ENCODE measurements at regions of chr21 and their contacts with region 1.

Region 1: DNA sequence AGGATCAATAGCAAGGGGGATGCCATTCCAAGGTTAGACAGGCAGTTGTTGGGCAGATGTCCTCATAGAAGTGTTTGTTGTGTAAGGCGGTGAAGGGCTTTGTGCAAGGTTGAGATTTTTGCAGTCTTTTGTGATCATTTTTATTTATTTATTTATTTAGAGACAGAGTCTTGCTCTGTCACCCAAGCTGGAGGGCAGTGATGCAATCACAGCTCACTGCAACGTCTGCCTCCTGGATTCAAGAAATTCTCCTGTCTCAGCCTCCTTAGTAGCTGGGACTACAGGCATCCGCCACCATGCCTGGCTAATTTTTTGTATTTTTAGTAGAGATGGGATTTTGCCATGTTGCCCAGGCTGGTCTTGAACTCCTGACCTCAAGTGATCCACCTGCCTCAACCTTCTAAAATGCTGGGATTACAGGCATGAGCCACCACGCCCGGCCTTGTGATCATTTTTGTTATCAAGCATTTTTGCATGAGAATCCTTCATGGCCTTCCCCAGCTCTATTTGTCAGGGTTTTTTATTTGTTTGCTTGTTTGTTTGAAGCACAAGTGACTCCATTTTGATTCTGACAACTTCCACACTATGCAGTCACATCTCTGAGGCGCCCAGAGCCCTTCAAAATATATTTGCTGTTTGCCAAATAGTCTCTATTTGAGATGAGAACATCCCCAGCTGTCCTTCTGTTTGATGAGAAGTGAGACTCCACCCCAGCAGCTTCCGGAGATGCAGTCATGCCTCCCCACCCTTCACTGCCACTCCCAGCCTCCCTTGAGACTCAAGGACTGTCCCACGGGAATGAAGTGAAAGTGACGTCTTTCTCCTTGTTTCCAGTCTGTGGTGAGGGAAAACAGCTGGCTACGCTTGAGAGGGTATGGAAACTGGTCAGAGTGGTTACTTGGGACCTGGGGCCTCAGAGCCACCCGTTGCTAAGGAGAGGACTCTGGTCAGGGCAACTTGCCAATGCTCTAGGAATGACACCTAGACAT is 38.0 kb downstream of the TMEM50B start:
- DNase-seq: peak; percentile 94
- ATAC-seq: peak; percentile 63
- H3K4me3 ChIP-seq: no peak overlapping the region
- H3K27ac ChIP-seq: peak overlapping the region; percentile 22; the same call in 1 of the 2 replicates
- H3K4me1 ChIP-seq: peaks cover 5% of the 10 kb centered on the region
- H3K27me3 ChIP-seq: no peaks in the 10 kb centered on the region
- CTCF ChIP-seq: no peak
- POLR2A ChIP-seq: no peak
- RAD21 ChIP-seq: no peak

Region 2: GRCh38 chr21:32860399-32860798 is 581.4 kb before region 1 on chr21:
- CTCF ChIA-PET with region 1: interaction called, 10 read pairs
- POLR2A ChIA-PET with region 1: no interaction called
- dilution Hi-C with region 1: no loop called
- in situ Hi-C with region 1: no loop called
- intact Hi-C with region 1: no loop called
- DNase-seq: no peak
- ATAC-seq: no peak
- H3K4me3 ChIP-seq: no peak overlapping the region
- H3K27ac ChIP-seq: no peak overlapping the region
- H3K4me1 ChIP-seq: no peaks in the 10 kb centered on the region
- H3K27me3 ChIP-seq: no peaks in the 10 kb centered on the region; the same call in 1 of the 2 replicates
- CTCF ChIP-seq: no peak
- POLR2A ChIP-seq: no peak
- RAD21 ChIP-seq: no peak

Region 3: DNA sequence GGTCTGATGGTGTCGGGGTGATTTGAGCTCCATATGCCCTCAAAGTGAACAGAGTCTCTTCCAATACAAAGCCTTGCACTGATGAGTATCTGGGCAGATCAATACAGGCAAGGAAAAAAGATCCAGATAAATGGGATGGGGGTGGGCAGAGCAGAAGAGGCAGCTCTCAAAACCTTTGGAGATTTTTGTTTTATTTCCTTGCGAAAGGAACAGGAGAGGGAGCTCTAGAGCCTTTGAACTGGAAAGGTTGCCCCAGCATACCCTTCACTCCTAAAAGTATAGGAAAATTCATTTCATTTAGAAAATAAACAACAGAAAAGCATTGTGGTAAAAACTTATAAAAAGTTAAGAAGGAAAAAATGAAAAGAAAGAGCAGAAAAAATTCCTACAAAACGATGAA is 447.5 kb before region 1 on chr21:
- CTCF ChIA-PET with region 1: interaction called, 5 read pairs
- POLR2A ChIA-PET with region 1: no interaction called
- dilution Hi-C with region 1: no loop called
- in situ Hi-C with region 1: no loop called
- intact Hi-C with region 1: loop called (anchors 1 kb)
- DNase-seq: peak; percentile 31
- ATAC-seq: peak; percentile 77
- H3K4me3 ChIP-seq: no peak overlapping the region
- H3K27ac ChIP-seq: no peak overlapping the region
- H3K4me1 ChIP-seq: no peaks in the 10 kb centered on the region
- H3K27me3 ChIP-seq: peaks cover 26% of the 10 kb centered on the region
- CTCF ChIP-seq: peak; percentile 63
- POLR2A ChIP-seq: no peak
- RAD21 ChIP-seq: peak; percentile 69

Region 4: DNA sequence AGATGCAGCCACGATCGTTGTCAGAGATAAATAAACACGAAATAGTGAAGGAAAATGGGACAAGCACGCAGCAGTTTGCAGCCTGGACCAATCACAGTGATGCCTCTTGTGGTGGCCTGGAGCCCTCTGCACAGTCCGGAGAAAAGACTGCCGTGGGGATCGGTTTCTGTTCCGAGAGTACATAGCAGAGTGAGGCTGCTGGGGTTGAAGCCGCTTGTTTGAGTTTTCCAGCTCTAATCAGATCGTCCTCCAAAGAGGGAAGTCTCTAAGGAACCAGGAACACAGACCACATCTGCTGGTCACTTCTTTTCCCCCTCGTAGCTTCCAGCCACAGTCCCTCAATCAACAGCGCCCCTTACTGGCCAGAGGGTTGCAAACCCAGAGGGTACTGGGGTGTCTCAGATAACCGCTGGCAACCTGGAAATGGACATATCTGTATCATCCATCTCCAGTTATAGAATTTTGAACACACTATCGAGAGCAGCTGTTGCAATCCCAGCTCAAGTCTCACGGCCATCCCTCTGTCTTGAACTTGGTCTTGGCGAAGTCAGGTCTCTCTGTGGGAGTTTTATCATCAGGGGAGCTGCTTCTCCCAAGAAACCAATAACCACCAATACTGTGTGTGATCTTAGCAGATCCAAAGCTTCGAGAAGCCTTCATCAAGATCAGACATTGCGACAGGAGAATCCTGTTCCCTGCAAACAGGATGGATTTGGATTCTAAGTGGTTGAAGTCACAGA is 314.5 kb before region 1 on chr21:
- CTCF ChIA-PET with region 1: no interaction called
- POLR2A ChIA-PET with region 1: no interaction called
- dilution Hi-C with region 1: no loop called
- in situ Hi-C with region 1: no loop called
- intact Hi-C with region 1: no loop called
- DNase-seq: peak; percentile 65
- ATAC-seq: peak; percentile 99
- H3K4me3 ChIP-seq: peak overlapping the region; percentile 29
- H3K27ac ChIP-seq: no peak overlapping the region
- H3K4me1 ChIP-seq: no peaks in the 10 kb centered on the region
- H3K27me3 ChIP-seq: peaks cover 37% of the 10 kb centered on the region
- CTCF ChIP-seq: peak; percentile 91
- POLR2A ChIP-seq: no peak; the same call in 1 of the 2 replicates
- RAD21 ChIP-seq: peak; percentile 95

Region 5: DNA sequence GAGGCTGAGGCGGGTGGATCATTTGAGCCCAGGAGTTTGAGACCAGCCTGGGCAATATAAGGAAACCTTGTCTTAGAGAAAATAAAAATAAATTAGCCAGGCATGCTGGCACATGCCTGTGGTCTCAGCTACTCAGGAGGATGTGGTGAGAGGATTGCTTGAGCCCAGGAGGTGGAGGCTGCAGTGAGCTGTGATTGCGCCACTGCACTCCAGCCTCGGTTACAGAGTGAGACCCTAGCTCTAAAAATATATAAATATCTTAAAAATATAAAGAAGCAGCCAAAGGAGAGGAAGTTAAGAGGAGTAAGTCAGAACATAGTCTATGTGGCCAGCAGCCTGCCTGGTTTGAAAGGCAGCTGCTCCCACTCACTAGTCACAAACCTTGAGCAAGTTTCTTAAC is 180.1 kb before region 1 on chr21:
- CTCF ChIA-PET with region 1: no interaction called
- POLR2A ChIA-PET with region 1: no interaction called
- dilution Hi-C with region 1: no loop called
- in situ Hi-C with region 1: no loop called
- intact Hi-C with region 1: loop called (anchors 1 kb)
- DNase-seq: peak; percentile 62
- ATAC-seq: peak; percentile 33
- H3K4me3 ChIP-seq: no peak overlapping the region
- H3K27ac ChIP-seq: peak overlapping the region; percentile 38; the same call in 1 of the 2 replicates
- H3K4me1 ChIP-seq: peaks cover 4% of the 10 kb centered on the region
- H3K27me3 ChIP-seq: no peaks in the 10 kb centered on the region
- CTCF ChIP-seq: no peak
- POLR2A ChIP-seq: no peak
- RAD21 ChIP-seq: no peak

Region 6: GRCh38 chr21:33360881-33361602 is 80.7 kb before region 1 on chr21:
- CTCF ChIA-PET with region 1: interaction called, 5 read pairs
- POLR2A ChIA-PET with region 1: no interaction called
- dilution Hi-C with region 1: no loop called
- in situ Hi-C with region 1: no loop called
- intact Hi-C with region 1: loop called (anchors 1 kb)
- DNase-seq: peak; percentile 87
- ATAC-seq: peak; percentile 74
- H3K4me3 ChIP-seq: no peak overlapping the region
- H3K27ac ChIP-seq: no peak overlapping the region
- H3K4me1 ChIP-seq: peaks cover 5% of the 10 kb centered on the region
- H3K27me3 ChIP-seq: no peaks in the 10 kb centered on the region
- CTCF ChIP-seq: peak; percentile 64
- POLR2A ChIP-seq: no peak
- RAD21 ChIP-seq: peak; percentile 49

Region 7: DNA sequence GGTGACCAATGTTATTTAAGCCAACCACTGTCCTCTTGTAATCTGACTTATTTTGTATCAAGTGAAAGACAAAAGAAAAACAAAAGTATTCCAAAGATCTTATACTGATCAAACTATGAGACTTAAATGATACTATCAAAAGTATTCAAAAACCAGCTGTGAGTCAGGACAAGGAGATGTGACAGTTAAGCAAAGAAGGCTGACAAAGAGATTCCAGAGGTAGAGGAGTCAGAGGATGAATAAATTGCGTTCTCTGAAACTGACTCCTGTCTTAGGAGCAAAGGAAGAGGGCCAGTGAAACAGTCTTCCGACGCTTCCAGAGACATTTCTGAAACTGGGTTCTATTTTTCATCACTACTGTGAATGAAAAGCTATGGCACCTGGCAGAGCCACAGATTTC is 17.1 kb after region 1 on chr21:
- CTCF ChIA-PET with region 1: interaction called, 10 read pairs
- POLR2A ChIA-PET with region 1: no interaction called
- dilution Hi-C with region 1: no loop called
- in situ Hi-C with region 1: no loop called
- intact Hi-C with region 1: no loop called
- DNase-seq: peak; percentile 19
- ATAC-seq: no peak; the same call in none of the 2 replicates
- H3K4me3 ChIP-seq: no peak overlapping the region
- H3K27ac ChIP-seq: no peak overlapping the region
- H3K4me1 ChIP-seq: 0 out of 2 replicates have a peak, but pooled peaks cover 3% of the 10 kb centered on the region
- H3K27me3 ChIP-seq: no peaks in the 10 kb centered on the region
- CTCF ChIP-seq: no peak
- POLR2A ChIP-seq: no peak
- RAD21 ChIP-seq: no peak

Region 8: DNA sequence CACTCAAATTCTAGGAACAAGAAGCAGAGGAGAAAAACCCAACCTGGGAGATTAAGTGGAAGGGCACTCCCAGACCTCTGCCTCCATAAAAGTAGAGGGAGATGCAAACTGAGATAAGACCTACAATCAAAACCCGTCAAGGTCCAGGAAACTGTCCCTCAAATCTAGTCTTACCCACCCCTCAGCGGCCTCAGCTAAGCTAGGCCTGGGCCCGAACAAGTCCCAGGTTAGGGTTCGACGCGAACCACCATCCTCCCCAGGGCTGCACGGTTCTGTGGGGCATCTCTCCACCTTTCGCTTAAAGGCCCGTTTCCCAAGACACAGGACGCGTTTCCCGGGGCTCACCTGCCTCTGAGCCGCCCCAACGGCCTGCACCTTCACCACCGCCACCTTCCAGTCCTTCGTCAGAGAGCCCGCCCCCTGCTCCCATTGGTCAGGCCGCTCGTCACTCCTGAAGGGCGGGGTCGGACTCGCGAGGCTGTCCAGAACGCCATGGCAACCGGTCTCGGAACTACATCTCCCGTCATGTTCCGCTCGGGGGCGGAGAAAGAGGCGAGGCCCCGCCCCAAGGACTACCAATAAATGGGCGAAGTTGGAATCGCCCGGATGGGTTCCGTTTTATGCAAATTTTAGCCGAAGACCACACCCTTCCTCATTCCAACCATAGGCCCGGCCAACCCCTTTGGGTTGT is 199.7 kb after region 1 on chr21 and contains the start of gene CRYZL1:
- CTCF ChIA-PET with region 1: no interaction called
- POLR2A ChIA-PET with region 1: no interaction called
- dilution Hi-C with region 1: no loop called
- in situ Hi-C with region 1: no loop called
- intact Hi-C with region 1: no loop called
- DNase-seq: peak; percentile 99
- ATAC-seq: peak; percentile 82
- H3K4me3 ChIP-seq: peak within 1 kb of the TSS; percentile 96
- H3K27ac ChIP-seq: peak within 1 kb of the TSS; percentile 91
- H3K4me1 ChIP-seq: peaks cover 4% of the 10 kb centered on the region; the same call in 1 of the 2 replicates
- H3K27me3 ChIP-seq: no peaks in the 10 kb centered on the region
- CTCF ChIP-seq: no peak
- POLR2A ChIP-seq: peak; percentile 69
- RAD21 ChIP-seq: no peak; the same call in 1 of the 2 replicates
- total RNA-seq, gene CRYZL1: 19.9 and 23.1 TPM in 2 replicates